Esophagus squamous epithelium (tissue), 5 donors: ENCODE measurements at regions of chr11 and their contacts with region 1.

Region 1: DNA sequence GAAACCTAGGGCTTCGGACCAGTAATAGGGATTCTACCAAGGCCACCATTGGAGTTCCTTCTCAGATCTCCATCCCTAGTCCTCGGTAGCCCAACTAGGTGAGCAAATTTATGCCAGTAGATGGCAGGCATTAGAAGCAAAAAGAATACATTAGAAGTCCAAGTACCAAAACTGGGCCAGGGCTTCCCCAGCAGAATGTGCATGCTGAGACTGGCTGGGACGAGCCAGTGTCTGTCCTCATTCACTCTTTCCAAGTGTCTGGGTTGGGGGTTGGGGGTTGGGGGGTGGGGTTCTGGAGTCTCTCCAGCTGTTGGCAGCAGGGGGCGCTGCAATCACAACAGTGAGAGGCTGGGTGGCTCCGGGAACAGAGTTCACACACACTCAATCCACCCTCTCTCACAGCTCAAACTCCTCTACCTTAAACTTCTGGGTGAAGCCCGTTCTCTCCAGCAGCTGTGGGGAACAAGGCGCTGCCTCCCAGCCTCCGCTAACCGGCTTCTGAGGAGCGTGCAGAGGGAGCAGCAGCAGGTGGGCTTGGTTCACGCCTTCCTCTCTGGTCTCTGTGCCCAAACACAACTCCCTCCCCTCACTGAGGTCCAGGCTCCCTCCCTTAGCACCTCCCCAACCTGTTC is 57.5 kb downstream of the BTG4 start:
- DNase-seq: no peak
- H3K4me3 ChIP-seq: no peak overlapping the region
- H3K27ac ChIP-seq: no peak overlapping the region
- H3K4me1 ChIP-seq: peaks cover 0 to 8% (median 0%) of the 10 kb centered on the region in 3 donors
- H3K27me3 ChIP-seq: peaks cover 0 to 24% (median 0%) of the 10 kb centered on the region in 4 donors
- CTCF ChIP-seq: peak in 4 of 6 experiments; percentile 2 to 41 (median 26)
- POLR2A ChIP-seq: no peak

Region 2: DNA sequence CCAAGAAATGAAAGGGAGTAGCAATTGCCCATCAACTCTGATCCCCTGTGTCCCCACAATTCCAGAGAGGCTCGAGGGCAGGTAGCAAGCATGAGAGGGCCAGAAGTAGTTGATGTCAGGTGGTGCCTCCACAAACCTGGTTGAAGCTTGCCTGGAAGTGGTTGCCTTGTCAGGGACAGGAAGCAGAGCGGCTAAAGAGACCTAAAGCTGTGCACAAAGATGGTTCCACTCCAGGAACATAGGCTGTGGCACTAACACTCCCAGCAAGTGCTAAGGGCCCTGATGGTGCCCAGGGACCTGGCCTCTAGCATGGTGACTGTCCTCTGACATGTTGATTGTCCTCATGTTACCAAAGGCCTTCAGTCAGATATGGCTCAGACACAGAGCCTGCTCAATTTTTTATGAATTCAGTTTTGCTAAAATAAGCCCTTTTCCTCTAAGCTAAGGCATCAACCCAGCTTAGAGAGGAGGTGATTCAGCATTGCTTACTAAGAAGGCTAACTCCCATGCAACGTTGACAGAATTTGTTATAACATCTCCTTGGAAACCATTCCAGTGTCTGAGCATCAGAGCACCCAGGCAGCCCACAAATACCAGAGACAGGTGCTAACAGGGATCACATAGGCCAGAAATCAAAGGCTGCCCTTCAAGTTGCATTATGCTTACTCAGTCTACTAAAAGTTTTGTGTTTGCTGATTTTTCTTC is 546.1 kb before region 1 on chr11:
- intact Hi-C with region 1: no loop called
- DNase-seq: no peak
- H3K4me3 ChIP-seq: no peak overlapping the region
- H3K27ac ChIP-seq: peak overlapping the region; percentile 45 to 79 (median 72)
- H3K4me1 ChIP-seq: peaks cover 12 to 61% (median 15%) of the 10 kb centered on the region in 3 donors
- H3K27me3 ChIP-seq: no peaks in the 10 kb centered on the region
- CTCF ChIP-seq: no peak
- POLR2A ChIP-seq: no peak

Region 3: GRCh38 chr11:111557425-111558111 is 102.9 kb after region 1 on chr11:
- intact Hi-C with region 1: loop called (anchors 10 kb)
- DNase-seq: no peak
- H3K4me3 ChIP-seq: no peak overlapping the region
- H3K27ac ChIP-seq: peak overlapping the region in 1 of 4 donors; percentile 49
- H3K4me1 ChIP-seq: peaks cover 0 to 16% (median 3%) of the 10 kb centered on the region in 3 donors
- H3K27me3 ChIP-seq: no peaks in the 10 kb centered on the region
- CTCF ChIP-seq: no peak
- POLR2A ChIP-seq: no peak